Right cardiac atrium (tissue), 5 donors: ENCODE measurements at regions of chr15 and their contacts with region 1.

Region 1: DNA sequence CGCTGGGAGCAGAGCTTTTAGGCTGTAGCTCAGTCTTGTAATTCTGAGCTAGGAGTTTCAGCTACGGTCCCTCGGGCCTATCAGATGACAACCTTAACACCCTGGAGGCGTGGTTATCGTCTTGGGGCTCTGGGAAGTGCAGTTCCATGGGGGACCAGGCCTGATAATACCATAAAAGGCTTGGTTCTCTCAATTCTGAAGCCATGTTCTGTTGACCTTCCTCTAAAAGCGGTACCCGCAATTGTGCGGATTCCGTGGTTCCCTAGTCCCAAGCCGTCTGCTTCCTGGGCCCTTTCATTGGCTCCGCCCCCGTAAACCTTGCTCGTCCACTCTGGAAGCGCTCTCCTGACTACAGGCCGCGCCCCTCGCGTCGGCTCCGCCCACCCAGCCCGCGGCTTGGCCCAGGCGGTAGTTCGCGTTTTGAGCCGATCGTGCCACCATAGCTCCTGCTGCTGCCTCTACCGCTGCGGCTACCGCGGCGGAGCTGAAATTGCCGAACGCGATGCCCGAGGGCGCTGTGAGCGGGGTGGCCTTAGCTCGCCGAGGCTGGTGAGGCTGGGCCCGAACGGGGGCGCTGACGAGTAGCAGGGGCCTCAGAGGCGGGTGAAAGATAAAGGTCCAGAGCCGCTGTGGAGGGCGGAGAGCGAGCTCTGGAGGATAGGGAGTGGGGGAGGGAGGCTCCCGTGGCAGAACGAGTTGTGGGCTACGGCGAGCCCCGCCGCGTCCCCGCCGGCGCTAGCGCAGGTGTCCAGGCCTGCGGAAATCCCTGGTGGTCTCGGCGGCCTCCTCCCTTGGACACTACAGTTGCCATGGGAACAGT is at the start of gene MAPKBP1:
- DNase-seq: peak; percentile 98 to 99 (median 99)
- ATAC-seq: peak; percentile 97 to 98
- H3K4me3 ChIP-seq: peak within 1 kb of the TSS; percentile 59
- H3K27ac ChIP-seq: peak within 1 kb of the TSS; percentile 57
- H3K4me1 ChIP-seq: peaks cover 9% of the 10 kb centered on the region
- H3K27me3 ChIP-seq: no peaks in the 10 kb centered on the region
- total RNA-seq, gene MAPKBP1: 16.0 to 20.4 (median 19.2) TPM

Region 2: GRCh38 chr15:41811432-41812195 is 37.3 kb after region 1 on chr15:
- intact Hi-C with region 1: loop called (anchors 2 to 5 kb)
- DNase-seq: peak; percentile 84 to 93 (median 92)
- ATAC-seq: peak; percentile 89 to 91
- H3K4me3 ChIP-seq: no peak overlapping the region
- H3K27ac ChIP-seq: no peak overlapping the region
- H3K4me1 ChIP-seq: peaks cover 1% of the 10 kb centered on the region
- H3K27me3 ChIP-seq: no peaks in the 10 kb centered on the region

Region 3: DNA sequence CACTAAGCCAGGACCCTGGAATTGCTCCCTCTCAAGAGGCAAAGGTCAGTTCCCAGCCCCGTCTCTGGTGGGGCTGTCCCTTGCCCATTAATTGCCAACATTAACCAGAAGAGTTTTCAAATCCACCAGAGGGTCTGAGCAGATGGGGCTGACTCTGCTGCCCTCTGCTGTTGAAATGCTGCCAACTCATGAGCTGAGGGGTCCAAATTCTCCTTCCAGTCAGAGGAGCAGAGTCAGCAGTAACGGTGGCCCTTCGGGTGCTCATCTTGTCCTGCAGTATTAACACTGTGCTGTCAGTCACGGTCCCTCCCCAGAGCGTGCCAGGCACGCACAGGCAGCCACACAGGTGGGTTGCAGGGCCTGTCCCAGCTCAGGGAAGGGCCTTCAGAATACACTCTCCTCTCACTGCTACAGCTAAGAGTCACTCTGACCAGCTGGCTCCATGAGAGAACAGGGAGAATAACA is 130.3 kb after region 1 on chr15:
- intact Hi-C with region 1: loop called in 1 of 4 experiments (anchors 10 kb)
- DNase-seq: peak; percentile 61 to 80 (median 76)
- ATAC-seq: peak; percentile 57 to 70
- H3K4me3 ChIP-seq: no peak overlapping the region
- H3K27ac ChIP-seq: peak overlapping the region; percentile 46
- H3K4me1 ChIP-seq: peaks cover 6% of the 10 kb centered on the region
- H3K27me3 ChIP-seq: no peaks in the 10 kb centered on the region

Region 4: GRCh38 chr15:42107473-42107872 is 333.2 kb after region 1 on chr15:
- intact Hi-C with region 1: no loop called
- DNase-seq: no peak
- ATAC-seq: peak in 1 of 2 donors; percentile 41
- H3K4me3 ChIP-seq: no peak overlapping the region
- H3K27ac ChIP-seq: no peak overlapping the region
- H3K4me1 ChIP-seq: no peaks in the 10 kb centered on the region
- H3K27me3 ChIP-seq: no peaks in the 10 kb centered on the region